ENCODE measurements at regions of chr3 and their contacts with region 1.

Region 1: DNA sequence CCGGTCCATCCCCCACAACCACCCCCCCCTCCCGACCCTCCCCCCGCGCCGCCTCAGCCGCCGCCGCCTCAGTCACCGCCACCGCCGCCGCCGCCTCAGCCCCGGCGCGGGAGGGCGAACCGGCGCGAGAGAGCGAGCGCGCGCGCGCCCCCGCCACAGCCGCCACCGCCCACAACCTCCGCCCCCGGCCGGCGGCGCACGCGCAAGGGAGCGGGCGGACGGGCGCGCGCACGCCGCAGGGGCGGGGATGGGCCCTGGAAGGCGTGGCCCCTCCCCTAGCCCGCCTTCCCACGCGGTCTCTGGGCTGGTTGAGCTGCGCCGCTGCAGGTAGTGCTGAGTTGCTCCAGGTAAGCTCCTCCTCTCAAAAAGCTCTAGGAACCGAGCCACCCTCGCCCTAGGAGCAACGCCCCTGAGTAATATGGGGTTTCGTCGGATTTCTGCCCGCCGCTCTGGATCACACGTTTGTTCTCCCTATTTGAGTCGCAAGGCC is at the start of gene TMCC1:
- DNase-seq: peak; percentile 61 to 90 (median 81)
- H3K4me3 ChIP-seq: peak within 1 kb of the TSS; percentile 65 to 99 (median 89)
- H3K27ac ChIP-seq: peak within 1 kb of the TSS; percentile 63 to 96 (median 92)
- H3K27me3 ChIP-seq: no peaks in the 10 kb centered on the region
- CTCF ChIP-seq: peak in 5 of 56 donors; percentile 2 to 25 (median 12)
- total RNA-seq, gene TMCC1: 64.8 to 161 (median 84.3) TPM

Region 2: DNA sequence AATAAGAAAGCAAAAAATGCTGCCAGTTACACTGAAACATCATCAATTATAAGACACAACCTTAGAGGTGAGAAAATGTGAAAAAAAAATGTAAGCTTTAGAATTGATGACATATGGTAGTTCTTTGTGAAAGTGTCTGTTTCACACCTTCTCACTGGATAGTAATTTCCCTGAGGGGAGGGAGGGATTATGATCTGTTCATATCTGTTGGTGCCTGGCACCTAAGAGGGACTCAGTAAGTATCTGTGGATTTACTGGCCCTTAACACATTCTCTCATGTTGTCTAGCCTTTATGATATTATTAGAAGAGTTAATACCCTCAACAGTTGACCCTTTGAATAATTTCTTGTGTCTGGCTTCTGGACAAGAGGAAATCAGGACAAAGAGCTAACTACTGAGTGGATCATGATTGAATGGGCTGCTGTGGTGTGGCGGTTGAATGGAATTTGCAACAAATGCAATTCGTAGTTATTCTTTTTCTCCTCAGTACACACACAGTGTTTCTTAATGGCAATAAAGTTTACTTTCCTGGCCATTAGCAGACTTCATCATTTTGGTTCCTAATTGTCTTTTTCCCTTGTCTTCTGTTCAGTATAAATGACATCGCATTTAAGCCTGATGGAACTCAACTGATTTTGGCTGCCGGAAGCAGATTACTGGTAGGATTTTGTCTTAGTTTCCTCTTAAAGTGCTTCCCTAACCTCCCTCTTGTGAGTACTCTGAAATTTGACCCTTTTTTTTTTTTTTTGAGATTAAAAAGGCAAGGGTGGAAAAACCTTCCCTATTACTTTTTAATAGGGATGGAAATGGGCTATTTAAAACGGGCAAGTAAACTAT is 444.1 kb before region 1 on chr3:
- intact Hi-C with region 1: no loop called
- DNase-seq: no peak
- H3K4me3 ChIP-seq: no peak overlapping the region
- H3K27ac ChIP-seq: peak overlapping the region in 1 of 59 donors; percentile 8
- H3K27me3 ChIP-seq: no peaks in the 10 kb centered on the region
- CTCF ChIP-seq: no peak

Region 3: GRCh38 chr3:129855454-129856419 is 37.9 kb before region 1 on chr3:
- intact Hi-C with region 1: loop called (anchors 5 kb)
- DNase-seq: no peak
- H3K4me3 ChIP-seq: peak overlapping the region in 2 of 59 donors; percentile 7 to 10
- H3K27ac ChIP-seq: peak overlapping the region in 55 of 59 donors; percentile 0 to 81 (median 60)
- H3K27me3 ChIP-seq: no peaks in the 10 kb centered on the region
- CTCF ChIP-seq: peak in 3 of 56 donors; percentile 4 to 26 (median 13)

Region 4: DNA sequence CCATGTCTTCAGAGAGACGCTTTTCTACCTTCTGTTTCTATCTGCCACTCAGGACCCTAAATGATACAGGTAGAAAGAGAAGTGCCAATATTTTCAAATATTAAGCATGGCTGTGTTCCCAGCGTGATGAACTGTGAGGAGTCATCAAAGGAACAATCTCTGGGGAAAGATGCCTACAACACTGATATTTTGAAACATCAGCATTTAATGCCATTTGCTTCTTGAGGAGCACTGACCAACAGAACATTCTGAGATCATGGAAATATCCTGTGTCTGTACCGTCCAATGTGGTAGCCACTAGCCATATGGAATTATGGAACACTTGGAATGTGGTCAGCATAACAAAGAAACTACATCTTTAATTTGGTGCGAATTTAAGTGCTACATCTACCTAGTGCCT is 333.9 kb after region 1 on chr3:
- intact Hi-C with region 1: no loop called
- DNase-seq: no peak
- H3K4me3 ChIP-seq: no peak overlapping the region
- H3K27ac ChIP-seq: no peak overlapping the region
- H3K27me3 ChIP-seq: no peaks in the 10 kb centered on the region
- CTCF ChIP-seq: no peak

Region 5: DNA sequence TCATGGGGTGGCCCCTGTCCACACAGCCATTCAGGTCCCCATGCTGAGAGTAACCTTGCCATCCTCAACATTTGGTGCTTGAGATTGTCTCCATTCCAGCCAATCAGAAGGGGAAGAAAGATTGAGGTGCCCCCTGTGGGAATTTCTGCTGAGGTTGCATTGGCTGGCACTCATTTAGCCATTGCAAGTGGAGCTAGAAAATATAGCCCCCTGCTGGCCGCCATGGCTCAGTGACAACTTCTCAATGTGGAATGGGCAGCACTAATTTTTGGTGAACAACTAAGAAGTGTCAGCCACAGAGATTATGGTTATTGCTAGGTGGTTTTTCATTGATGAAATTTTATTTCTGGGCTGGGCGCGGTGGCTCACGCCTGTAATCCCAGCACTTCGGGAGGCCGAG is 645.4 kb after region 1 on chr3:
- intact Hi-C with region 1: no loop called
- DNase-seq: peak in 4 of 10 donors; percentile 32 to 44 (median 40)
- H3K4me3 ChIP-seq: no peak overlapping the region
- H3K27ac ChIP-seq: no peak overlapping the region
- H3K27me3 ChIP-seq: peaks cover 0 to 4% (median 0%) of the 10 kb centered on the region in 45 donors
- CTCF ChIP-seq: peak in 55 of 56 donors; percentile 27 to 69 (median 54)